Dorsolateral prefrontal cortex (tissue), 120 donors: ENCODE measurements at regions of chr11 and their contacts with region 1.

Region 1: DNA sequence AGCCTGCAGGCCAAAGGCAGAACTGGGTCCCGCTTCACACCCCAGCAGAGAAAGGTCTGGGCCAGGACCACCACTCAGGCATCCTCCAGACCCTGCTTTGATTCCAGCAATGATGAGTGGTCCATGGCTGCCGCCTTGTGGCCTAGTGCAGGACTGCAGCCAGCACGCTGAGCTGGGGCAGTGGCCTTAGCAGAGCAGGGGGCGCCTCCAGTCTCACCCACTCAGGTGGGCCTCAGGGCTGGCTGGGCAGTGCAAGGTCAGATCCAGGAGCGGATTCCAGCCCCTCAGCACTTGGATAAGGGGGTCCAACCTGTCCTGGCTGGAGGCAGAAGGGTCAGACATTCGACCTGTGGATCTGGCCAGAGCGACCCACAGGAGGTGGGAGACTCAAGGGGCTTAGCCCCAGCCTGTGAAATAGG is 9.6 kb upstream of the PDE2A start:
- DNase-seq: peak; percentile 58 to 86 (median 76)
- H3K4me3 ChIP-seq: no peak overlapping the region
- H3K27ac ChIP-seq: peak overlapping the region in 26 of 59 donors; percentile 11 to 85 (median 31)
- H3K27me3 ChIP-seq: no peaks in the 10 kb centered on the region
- CTCF ChIP-seq: peak; percentile 75 to 98 (median 94)

Region 2: GRCh38 chr11:72454791-72455190 is 229.0 kb before region 1 on chr11:
- intact Hi-C with region 1: no loop called
- DNase-seq: no peak
- H3K4me3 ChIP-seq: no peak overlapping the region
- H3K27ac ChIP-seq: no peak overlapping the region
- H3K27me3 ChIP-seq: no peaks in the 10 kb centered on the region
- CTCF ChIP-seq: peak in 3 of 56 donors; percentile 6 to 27 (median 16)

Region 3: DNA sequence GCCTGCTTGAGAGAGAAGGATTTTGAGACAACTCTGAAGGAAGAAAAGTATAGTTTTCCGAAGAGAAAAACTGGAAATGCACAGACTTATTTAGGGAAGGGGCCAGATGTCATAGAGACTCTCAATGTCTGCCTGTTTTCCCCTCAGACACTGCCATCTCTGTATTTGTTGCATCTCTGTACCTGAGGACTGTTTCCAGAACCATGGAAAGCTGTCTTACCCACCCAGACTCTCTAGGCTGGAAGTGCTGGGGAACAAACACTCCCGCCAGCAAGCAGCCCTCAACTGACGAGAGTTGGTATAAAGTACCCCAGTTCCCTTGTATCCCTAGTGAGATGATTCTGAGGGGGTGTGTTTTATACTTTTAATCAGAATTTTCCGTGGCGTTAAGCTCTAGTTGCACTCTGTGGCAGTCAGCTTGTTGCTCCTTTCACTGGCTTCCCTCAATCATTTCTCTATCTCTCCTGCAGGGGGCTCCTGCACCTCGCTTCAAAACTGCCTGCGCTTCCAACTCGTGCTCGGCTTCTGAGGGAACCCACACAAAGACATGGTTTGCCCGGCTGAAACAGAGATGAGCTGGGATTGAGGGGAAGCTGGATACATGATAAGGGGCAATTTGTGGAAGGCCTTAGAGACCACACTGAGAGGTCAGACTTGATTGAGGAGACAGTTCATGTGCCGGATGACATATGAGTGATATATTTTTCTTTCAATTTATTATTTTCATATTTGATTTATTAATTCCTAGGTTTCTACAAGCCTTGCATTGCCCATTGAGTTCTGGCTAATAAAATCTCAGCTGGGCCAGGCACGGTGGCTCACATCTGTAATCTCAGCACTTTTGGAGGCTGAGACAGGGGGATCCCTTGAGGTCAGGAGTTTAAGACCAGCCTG is 212.5 kb before region 1 on chr11:
- intact Hi-C with region 1: loop called in 1 of 2 experiments (anchors 2 kb)
- DNase-seq: peak; percentile 46 to 82 (median 72)
- H3K4me3 ChIP-seq: peak overlapping the region in 11 of 59 donors; percentile 1 to 35 (median 9)
- H3K27ac ChIP-seq: peak overlapping the region in 1 of 59 donors; percentile 13
- H3K27me3 ChIP-seq: peaks cover 0 to 15% (median 0%) of the 10 kb centered on the region in 45 donors
- CTCF ChIP-seq: peak; percentile 72 to 94 (median 87)

Region 4: DNA sequence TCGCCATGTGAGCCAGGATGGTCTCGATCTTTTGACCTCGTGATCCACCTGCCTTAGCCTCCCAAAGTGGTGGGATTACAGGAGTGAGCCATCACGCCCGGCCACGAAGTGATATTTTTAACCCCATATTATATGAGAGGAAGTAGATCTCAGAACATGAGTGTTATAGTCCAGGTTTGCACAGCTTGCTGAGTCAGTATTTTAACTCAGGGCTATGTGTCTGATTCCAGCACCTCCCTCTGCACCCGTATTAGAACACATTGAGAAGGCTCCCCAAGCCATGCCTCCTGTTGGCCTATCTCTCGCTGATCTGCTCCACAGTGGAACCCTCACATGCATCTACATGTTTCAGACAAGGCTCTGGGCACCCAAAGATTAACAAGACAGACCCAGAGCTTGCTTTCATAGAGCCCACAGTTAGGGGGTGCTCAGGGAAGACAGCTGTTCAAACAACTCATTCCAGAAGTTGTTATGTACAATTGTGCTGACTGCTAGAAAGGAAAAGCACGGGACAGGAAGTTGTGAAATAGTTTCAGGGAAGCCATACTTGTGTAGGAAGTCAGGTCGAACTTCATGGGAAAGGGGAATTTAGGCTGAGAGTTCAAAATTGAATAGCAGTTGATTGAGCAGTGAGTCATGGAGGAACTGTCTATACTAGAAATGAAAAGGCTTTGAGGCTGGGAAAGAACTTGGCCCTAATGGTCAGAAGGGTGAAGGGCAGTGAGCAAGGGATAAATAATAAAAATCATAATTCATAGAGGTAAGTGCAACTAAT is 200.2 kb before region 1 on chr11:
- intact Hi-C with region 1: loop called in 1 of 2 experiments (anchors 5 kb)
- DNase-seq: no peak
- H3K4me3 ChIP-seq: no peak overlapping the region
- H3K27ac ChIP-seq: peak overlapping the region in 4 of 59 donors; percentile 4 to 47 (median 29)
- H3K27me3 ChIP-seq: no peaks in the 10 kb centered on the region
- CTCF ChIP-seq: peak in 1 of 56 donors; percentile 5

Region 5: GRCh38 chr11:72585762-72586311 is 98.0 kb before region 1 on chr11:
- intact Hi-C with region 1: loop called (anchors 2 to 5 kb)
- DNase-seq: peak in 9 of 10 donors; percentile 54 to 76 (median 67)
- H3K4me3 ChIP-seq: no peak overlapping the region
- H3K27ac ChIP-seq: peak overlapping the region in 6 of 59 donors; percentile 8 to 45 (median 16)
- H3K27me3 ChIP-seq: peaks cover 0 to 15% (median 0%) of the 10 kb centered on the region in 45 donors
- CTCF ChIP-seq: peak; percentile 76 to 98 (median 94)

Region 6: DNA sequence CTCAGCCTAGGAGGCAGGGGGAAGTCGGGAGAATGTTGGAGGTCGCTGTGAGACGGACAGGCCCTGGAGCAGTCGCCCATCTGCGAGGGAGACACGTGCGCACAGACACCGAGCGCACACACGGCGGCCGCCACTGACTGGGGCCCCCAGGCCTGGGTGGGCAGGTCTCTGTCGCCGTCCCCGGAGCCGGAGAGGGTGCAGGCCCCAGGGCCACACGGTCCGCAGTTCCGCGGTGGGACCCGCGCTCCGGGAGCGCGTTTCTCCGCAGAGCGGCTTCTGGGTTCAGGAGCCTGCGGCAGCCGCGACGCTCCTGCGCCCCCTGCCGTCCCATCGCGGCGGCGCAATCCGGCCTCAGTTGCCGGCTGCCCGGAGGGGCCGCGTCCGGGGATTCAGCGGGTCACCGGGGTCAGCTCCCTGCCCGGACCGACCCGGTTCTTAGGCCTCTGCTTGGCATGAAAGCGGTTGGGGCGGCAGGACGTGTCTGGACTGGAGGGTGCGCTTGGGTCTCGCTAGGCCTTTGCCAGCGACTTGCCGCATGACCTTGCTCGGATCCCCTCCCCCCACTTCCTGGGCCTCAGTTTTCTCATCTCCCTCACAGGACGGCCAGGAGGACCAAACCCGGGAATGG is 40.8 kb before region 1 on chr11:
- intact Hi-C with region 1: loop called (anchors 2 to 5 kb)
- DNase-seq: peak in 5 of 10 donors; percentile 47 to 81 (median 54)
- H3K4me3 ChIP-seq: peak overlapping the region; percentile 38 to 87 (median 71)
- H3K27ac ChIP-seq: peak overlapping the region in 55 of 59 donors; percentile 5 to 88 (median 73)
- H3K27me3 ChIP-seq: peaks cover 0 to 3% (median 0%) of the 10 kb centered on the region in 45 donors
- CTCF ChIP-seq: peak; percentile 82 to 100 (median 98)

Region 7: GRCh38 chr11:72652873-72653630 is 30.7 kb before region 1 on chr11:
- intact Hi-C with region 1: loop called (anchors 5 kb)
- DNase-seq: peak in 1 of 10 donors; percentile 26
- H3K4me3 ChIP-seq: no peak overlapping the region
- H3K27ac ChIP-seq: peak overlapping the region in 29 of 59 donors; percentile 0 to 65 (median 35)
- H3K27me3 ChIP-seq: no peaks in the 10 kb centered on the region
- CTCF ChIP-seq: no peak